Caco-2 (cell line): ENCODE measurements at regions of chr20 and their contacts with region 1.

Region 1: DNA sequence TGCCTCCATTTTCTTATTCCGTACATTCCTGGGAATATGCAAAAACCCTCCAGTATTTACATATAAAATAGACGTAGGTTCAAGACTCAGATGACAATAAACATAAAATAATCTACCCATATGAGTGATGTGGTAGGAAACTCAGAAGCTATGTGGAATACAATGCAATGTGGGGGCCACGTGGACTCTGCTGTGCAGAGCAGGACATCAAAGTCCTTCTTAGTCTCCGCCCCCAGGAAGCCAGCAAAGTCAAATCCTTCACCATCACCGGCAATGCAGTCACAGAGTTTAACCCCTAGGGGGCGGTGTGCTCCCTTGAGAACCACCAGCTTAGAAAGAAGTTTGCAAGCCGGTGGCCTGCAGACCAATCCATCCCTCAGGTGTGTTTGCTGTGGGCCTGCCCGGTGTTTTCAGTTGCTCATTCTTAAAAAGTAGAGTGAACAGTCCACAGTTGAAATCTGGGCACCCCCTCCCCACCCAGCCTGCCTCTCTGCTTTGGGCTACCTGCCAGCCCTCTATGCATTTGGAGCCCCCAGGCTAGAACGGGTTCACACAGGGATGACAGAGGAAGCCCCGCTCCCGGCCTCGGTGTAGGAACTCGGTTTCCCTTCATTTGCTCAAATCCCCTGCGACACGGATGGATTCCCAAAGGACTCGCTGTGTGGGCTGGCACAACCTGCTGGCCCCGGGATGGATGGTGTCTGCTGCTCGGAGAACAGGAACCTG is 59.9 kb downstream of the SULF2 start:
- DNase-seq: peak; percentile 94 to 95
- H3K4me3 ChIP-seq: no peak overlapping the region
- H3K4me3 Mint-ChIP-seq: no peak overlapping the region
- H3K27ac Mint-ChIP-seq: no peak overlapping the region
- H3K4me1 ChIP-seq: peaks cover 12% of the 10 kb centered on the region
- H3K4me1 Mint-ChIP-seq: peaks cover 9% of the 10 kb centered on the region
- H3K27me3 ChIP-seq: no peaks in the 10 kb centered on the region
- H3K27me3 Mint-ChIP-seq: no peaks in the 10 kb centered on the region
- CTCF ChIP-seq: peak; percentile 99 to 100

Region 2: GRCh38 chr20:47886460-47887041 is 161.1 kb after region 1 on chr20:
- CTCF ChIA-PET with region 1: no interaction called
- POLR2A ChIA-PET with region 1: no interaction called
- intact Hi-C with region 1: loop called (anchors 10 kb)
- DNase-seq: peak in 1 of 2 experiments; percentile 36
- H3K4me3 ChIP-seq: no peak overlapping the region
- H3K4me3 Mint-ChIP-seq: no peak overlapping the region
- H3K27ac Mint-ChIP-seq: no peak overlapping the region
- H3K4me1 ChIP-seq: peaks cover 6% of the 10 kb centered on the region
- H3K4me1 Mint-ChIP-seq: peaks cover 5% of the 10 kb centered on the region
- H3K27me3 ChIP-seq: no peaks in the 10 kb centered on the region; the same call in 1 of the 2 replicates
- H3K27me3 Mint-ChIP-seq: peaks cover 6% of the 10 kb centered on the region
- CTCF ChIP-seq: no peak